Activated CD4-positive, alpha-beta memory T cell treated with anti-CD3 and anti-CD28 coated beads for 36 hours (primary cell): ENCODE measurements at regions of chr15 and their contacts with region 1.

Region 1: GRCh38 chr15:42207674-42208579 is at the start of gene VPS39:
- DNase-seq: peak; percentile 92
- H3K4me3 Mint-ChIP-seq: peak within 1 kb of the TSS; percentile 93
- H3K27ac Mint-ChIP-seq: peak within 1 kb of the TSS; percentile 94
- H3K4me1 Mint-ChIP-seq: peaks cover 31% of the 10 kb centered on the region
- H3K27me3 Mint-ChIP-seq: no peaks in the 10 kb centered on the region
- total RNA-seq, gene VPS39: 52.6 to 57.8 TPM

Region 2: GRCh38 chr15:42018306-42019224 is 189.4 kb before region 1 on chr15:
- CTCF ChIA-PET with region 1: no interaction called
- POLR2A ChIA-PET with region 1: no interaction called
- intact Hi-C with region 1: no loop called
- DNase-seq: no peak
- H3K4me3 Mint-ChIP-seq: no peak overlapping the region
- H3K27ac Mint-ChIP-seq: no peak overlapping the region
- H3K4me1 Mint-ChIP-seq: no peaks in the 10 kb centered on the region
- H3K27me3 Mint-ChIP-seq: peaks cover 1% of the 10 kb centered on the region

Region 3: GRCh38 chr15:42138968-42139386 is 69.0 kb before region 1 on chr15:
- CTCF ChIA-PET with region 1: no interaction called
- POLR2A ChIA-PET with region 1: no interaction called
- intact Hi-C with region 1: no loop called
- DNase-seq: no peak
- H3K4me3 Mint-ChIP-seq: no peak overlapping the region
- H3K27ac Mint-ChIP-seq: no peak overlapping the region
- H3K4me1 Mint-ChIP-seq: no peaks in the 10 kb centered on the region
- H3K27me3 Mint-ChIP-seq: peaks cover 5% of the 10 kb centered on the region

Region 4: GRCh38 chr15:42193383-42193782 is 14.5 kb before region 1 on chr15:
- CTCF ChIA-PET with region 1: interaction called, 6 read pairs
- POLR2A ChIA-PET with region 1: interaction called, 5 read pairs
- intact Hi-C with region 1: loop called (anchors 1 kb)
- DNase-seq: no peak
- H3K4me3 Mint-ChIP-seq: peak overlapping the region; percentile 41
- H3K27ac Mint-ChIP-seq: peak overlapping the region; percentile 83
- H3K4me1 Mint-ChIP-seq: peaks cover 62% of the 10 kb centered on the region
- H3K27me3 Mint-ChIP-seq: no peaks in the 10 kb centered on the region

Region 5: GRCh38 chr15:42632105-42632675 is 424.3 kb after region 1 on chr15:
- CTCF ChIA-PET with region 1: no interaction called
- POLR2A ChIA-PET with region 1: no interaction called
- intact Hi-C with region 1: no loop called
- DNase-seq: no peak
- H3K4me3 Mint-ChIP-seq: no peak overlapping the region
- H3K27ac Mint-ChIP-seq: no peak overlapping the region
- H3K4me1 Mint-ChIP-seq: no peaks in the 10 kb centered on the region
- H3K27me3 Mint-ChIP-seq: no peaks in the 10 kb centered on the region